CD8-positive, alpha-beta memory T cell (primary cell): ENCODE measurements at regions of chr19 and their contacts with region 1.

Region 1: GRCh38 chr19:5904352-5905113 is at the start of gene VMAC:
- DNase-seq: peak; percentile 100
- H3K4me3 ChIP-seq: peak within 1 kb of the TSS; percentile 97
- H3K4me3 Mint-ChIP-seq: peak within 1 kb of the TSS; percentile 90 to 97 (median 94)
- H3K27ac ChIP-seq: peak within 1 kb of the TSS; percentile 96
- H3K27ac Mint-ChIP-seq: peak within 1 kb of the TSS; percentile 93 to 100 (median 100)
- H3K4me1 ChIP-seq: peaks cover 25% of the 10 kb centered on the region
- H3K4me1 Mint-ChIP-seq: peaks cover 21 to 56% (median 27%) of the 10 kb centered on the region in 3 donors
- H3K27me3 ChIP-seq: no peaks in the 10 kb centered on the region
- H3K27me3 Mint-ChIP-seq: no peaks in the 10 kb centered on the region
- total RNA-seq, gene VMAC: 4.0 to 4.1 TPM

Region 2: GRCh38 chr19:5753743-5754142 is 150.8 kb before region 1 on chr19:
- CTCF ChIA-PET with region 1: no interaction called
- POLR2A ChIA-PET with region 1: no interaction called
- DNase-seq: no peak
- H3K4me3 ChIP-seq: no peak overlapping the region
- H3K4me3 Mint-ChIP-seq: no peak overlapping the region
- H3K27ac ChIP-seq: no peak overlapping the region
- H3K27ac Mint-ChIP-seq: peak overlapping the region in 1 of 8 donors; percentile 50
- H3K4me1 ChIP-seq: no peaks in the 10 kb centered on the region
- H3K4me1 Mint-ChIP-seq: no peaks in the 10 kb centered on the region
- H3K27me3 ChIP-seq: no peaks in the 10 kb centered on the region
- H3K27me3 Mint-ChIP-seq: peaks cover 9 to 10% of the 10 kb centered on the region in 2 donors

Region 3: DNA sequence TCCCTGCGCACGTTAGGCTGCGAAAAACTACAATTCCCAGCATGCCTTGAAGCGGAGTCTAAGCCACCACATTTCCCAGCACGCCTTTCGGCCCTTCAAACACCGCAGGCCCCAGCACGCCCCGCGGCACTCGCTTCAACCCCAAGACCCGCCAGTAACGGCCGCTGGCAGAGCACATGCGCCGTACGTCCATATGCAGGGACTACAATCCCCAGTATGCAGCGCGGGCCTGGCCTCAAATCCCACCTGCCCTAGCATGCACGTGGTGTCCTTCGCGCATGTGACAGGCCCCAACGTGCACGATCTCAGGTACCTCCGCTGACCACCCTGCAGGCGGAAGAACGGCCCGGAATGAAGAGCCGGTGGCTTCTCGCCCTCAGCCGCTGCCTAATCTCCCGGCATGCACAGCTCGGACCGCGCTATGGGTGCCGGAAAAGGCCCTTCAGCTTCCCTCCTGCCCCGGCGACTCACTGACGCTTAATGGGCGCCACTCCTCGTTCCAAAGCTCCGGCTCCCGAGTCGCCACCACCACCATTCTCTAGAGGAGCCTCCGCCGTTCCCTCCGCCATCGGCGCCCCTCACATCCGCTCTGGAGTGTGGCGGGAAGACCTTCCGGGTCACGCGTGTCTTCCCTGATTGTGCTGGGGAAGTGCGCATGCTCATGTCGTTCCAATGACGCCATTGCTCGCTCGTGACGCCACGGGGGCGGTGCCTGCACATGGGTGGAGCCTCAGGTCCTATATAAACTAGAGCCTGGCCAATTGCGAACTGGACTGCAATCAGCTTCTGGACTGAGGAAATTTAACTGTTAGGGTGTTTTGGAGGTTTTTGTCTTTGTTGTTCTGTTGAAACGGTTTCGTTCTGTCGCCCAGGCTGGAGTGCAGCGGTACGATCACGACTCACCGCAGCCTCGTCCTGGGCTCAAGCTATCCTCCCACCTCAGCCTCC is 113.7 kb before region 1 on chr19 and contains the start of gene DUS3L:
- CTCF ChIA-PET with region 1: no interaction called
- POLR2A ChIA-PET with region 1: interaction called, 10 read pairs
- DNase-seq: peak; percentile 93 to 97 (median 94)
- H3K4me3 ChIP-seq: peak within 1 kb of the TSS; percentile 95
- H3K4me3 Mint-ChIP-seq: peak within 1 kb of the TSS; percentile 94 to 100 (median 99)
- H3K27ac ChIP-seq: peak within 1 kb of the TSS; percentile 99
- H3K27ac Mint-ChIP-seq: peak within 1 kb of the TSS; percentile 95 to 100 (median 100)
- H3K4me1 ChIP-seq: peaks cover 14% of the 10 kb centered on the region
- H3K4me1 Mint-ChIP-seq: peaks cover 16 to 18% (median 17%) of the 10 kb centered on the region in 3 donors
- H3K27me3 ChIP-seq: no peaks in the 10 kb centered on the region
- H3K27me3 Mint-ChIP-seq: peaks cover 0 to 3% of the 10 kb centered on the region in 2 donors
- total RNA-seq, gene DUS3L: 90.9 to 93.6 TPM

Region 4: DNA sequence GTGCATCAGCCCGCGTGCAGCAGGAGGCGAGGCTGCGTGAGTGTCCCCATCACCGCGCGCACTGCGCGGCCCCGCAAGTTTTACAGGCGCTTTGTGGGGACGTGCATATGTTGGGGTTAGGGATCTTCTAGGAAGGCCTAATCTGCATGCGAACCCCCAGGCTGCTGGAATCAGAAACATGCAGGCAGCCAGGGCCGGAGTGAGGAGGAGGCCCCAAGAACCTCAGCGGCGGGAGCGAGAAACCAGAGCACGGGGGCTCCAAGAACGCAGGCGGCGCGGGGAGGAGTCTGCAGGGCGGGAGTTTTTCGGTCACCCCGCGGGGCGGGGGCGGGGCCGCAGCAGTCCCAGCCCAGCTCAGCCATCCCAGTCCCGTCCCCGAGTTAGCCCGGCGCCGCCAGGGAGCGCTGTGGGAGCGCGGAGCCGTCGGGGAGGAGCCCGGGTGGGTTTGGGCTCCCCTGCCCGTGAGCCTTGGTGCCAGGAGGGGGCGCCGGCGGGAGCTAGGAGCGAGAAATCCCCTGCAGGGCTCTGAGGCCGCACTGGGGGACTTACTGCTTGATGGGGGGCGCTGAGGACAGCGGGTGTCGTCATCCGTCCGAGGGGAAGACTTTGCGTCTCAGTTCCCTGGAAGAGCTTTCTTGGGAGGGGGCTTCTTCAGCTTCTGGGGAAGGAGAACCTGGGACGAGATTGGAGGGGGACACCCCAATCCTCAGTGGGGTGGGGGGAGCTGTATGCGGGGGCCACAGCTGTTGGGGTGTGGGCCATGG is 100.6 kb before region 1 on chr19:
- CTCF ChIA-PET with region 1: interaction called, 10 read pairs
- POLR2A ChIA-PET with region 1: interaction called, 13 read pairs
- DNase-seq: peak; percentile 87 to 94 (median 89)
- H3K4me3 ChIP-seq: peak overlapping the region; percentile 75
- H3K4me3 Mint-ChIP-seq: peak overlapping the region; percentile 27 to 87 (median 67)
- H3K27ac ChIP-seq: peak overlapping the region; percentile 22
- H3K27ac Mint-ChIP-seq: peak overlapping the region in 7 of 8 donors; percentile 29 to 88 (median 79)
- H3K4me1 ChIP-seq: peaks cover 20% of the 10 kb centered on the region
- H3K4me1 Mint-ChIP-seq: peaks cover 9 to 27% (median 20%) of the 10 kb centered on the region in 3 donors
- H3K27me3 ChIP-seq: peaks cover 22% of the 10 kb centered on the region
- H3K27me3 Mint-ChIP-seq: peaks cover 11 to 26% of the 10 kb centered on the region in 2 donors

Region 5: DNA sequence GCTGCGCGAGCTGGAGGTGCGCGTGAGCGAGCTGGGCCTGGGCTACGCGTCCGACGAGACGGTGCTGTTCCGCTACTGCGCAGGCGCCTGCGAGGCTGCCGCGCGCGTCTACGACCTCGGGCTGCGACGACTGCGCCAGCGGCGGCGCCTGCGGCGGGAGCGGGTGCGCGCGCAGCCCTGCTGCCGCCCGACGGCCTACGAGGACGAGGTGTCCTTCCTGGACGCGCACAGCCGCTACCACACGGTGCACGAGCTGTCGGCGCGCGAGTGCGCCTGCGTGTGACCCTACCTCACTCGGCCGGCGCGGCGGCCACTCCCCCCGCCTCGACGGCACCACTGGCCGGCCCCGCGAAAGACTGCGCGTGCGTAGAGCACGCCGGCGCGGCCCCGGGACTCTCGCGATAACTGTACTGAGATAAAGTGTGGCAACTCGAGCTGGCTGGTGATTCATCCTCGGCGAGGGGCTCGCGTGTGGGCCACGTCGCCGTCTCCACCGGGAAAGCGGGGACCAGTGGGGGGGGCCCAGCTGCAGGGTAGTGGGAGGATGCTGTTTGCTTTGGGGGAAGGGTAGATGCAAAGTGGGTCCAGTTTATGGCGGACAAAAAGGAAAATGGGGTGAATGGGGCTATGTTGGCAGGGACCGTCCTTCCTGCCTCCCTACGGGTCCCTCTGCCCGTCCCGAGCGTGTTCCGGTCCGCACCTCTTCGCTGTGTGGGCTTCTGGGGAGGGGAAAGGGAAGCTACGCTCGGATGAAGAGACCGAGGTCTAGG is 76.5 kb before region 1 on chr19:
- CTCF ChIA-PET with region 1: no interaction called
- POLR2A ChIA-PET with region 1: interaction called, 24 read pairs
- DNase-seq: peak; percentile 82 to 96 (median 87)
- H3K4me3 ChIP-seq: peak overlapping the region; percentile 76
- H3K4me3 Mint-ChIP-seq: peak overlapping the region; percentile 85 to 95 (median 92)
- H3K27ac ChIP-seq: peak overlapping the region; percentile 77
- H3K27ac Mint-ChIP-seq: peak overlapping the region; percentile 81 to 97 (median 92)
- H3K4me1 ChIP-seq: peaks cover 19% of the 10 kb centered on the region
- H3K4me1 Mint-ChIP-seq: peaks cover 4 to 19% (median 4%) of the 10 kb centered on the region in 3 donors
- H3K27me3 ChIP-seq: no peaks in the 10 kb centered on the region
- H3K27me3 Mint-ChIP-seq: peaks cover 3 to 7% of the 10 kb centered on the region in 2 donors

Region 6: GRCh38 chr19:5961969-5962945 is 57.7 kb after region 1 on chr19:
- CTCF ChIA-PET with region 1: interaction called, 9 read pairs
- POLR2A ChIA-PET with region 1: interaction called, 21 read pairs
- DNase-seq: peak; percentile 50 to 89 (median 85)
- H3K4me3 ChIP-seq: peak overlapping the region; percentile 43
- H3K4me3 Mint-ChIP-seq: peak overlapping the region; percentile 17 to 90 (median 82)
- H3K27ac ChIP-seq: peak overlapping the region; percentile 71
- H3K27ac Mint-ChIP-seq: peak overlapping the region; percentile 90 to 99 (median 98)
- H3K4me1 ChIP-seq: peaks cover 88% of the 10 kb centered on the region
- H3K4me1 Mint-ChIP-seq: peaks cover 79 to 97% (median 90%) of the 10 kb centered on the region in 3 donors
- H3K27me3 ChIP-seq: no peaks in the 10 kb centered on the region
- H3K27me3 Mint-ChIP-seq: no peaks in the 10 kb centered on the region

Region 7: DNA sequence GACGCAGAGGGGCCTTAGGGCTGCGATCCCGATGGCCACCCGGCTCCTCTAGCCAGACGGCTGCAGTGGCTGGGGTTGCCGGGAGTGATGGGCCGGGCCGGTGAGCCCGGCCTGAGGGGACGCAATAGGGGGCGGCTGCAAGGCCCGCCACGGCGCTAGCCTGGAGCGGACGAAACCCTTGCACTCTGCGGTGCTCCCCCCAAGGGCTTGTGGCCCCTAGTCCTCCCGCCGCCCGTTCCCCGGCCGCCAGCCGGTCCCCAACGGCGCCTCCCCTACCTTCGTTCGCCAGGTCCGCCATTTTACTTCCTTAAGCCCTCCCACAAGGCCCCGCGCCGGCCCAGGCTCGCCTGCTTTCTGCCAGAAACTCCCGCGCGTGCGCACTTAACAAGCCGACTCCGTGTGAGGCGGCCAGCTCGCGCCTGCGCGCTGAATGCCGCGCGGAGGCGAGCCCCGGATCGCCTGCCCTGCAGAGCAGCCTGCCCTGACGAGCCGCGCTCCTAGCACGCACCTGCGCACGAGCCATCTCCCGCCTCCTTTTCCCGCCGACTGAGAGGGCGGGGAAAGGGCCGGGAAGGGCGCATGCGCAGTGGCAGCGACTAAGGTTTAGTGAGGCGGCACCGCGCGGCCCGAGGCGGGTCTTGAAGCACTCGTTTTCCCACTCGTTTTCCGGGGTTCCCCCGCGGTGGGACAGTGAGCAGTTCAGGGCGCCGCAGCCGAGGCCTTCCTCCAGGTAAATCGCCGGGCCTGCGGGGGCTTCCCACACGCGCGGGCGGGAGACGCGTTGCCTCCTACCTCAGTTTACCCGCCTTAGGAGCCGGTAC is 73.5 kb after region 1 on chr19 and contains the start of gene RANBP3:
- CTCF ChIA-PET with region 1: interaction called, 3 read pairs
- POLR2A ChIA-PET with region 1: interaction called, 14 read pairs
- DNase-seq: peak; percentile 97 to 100 (median 99)
- H3K4me3 ChIP-seq: peak within 1 kb of the TSS; percentile 72
- H3K4me3 Mint-ChIP-seq: peak within 1 kb of the TSS; percentile 92 to 96 (median 94)
- H3K27ac ChIP-seq: peak within 1 kb of the TSS; percentile 80
- H3K27ac Mint-ChIP-seq: peak within 1 kb of the TSS; percentile 89 to 98 (median 94)
- H3K4me1 ChIP-seq: peaks cover 45% of the 10 kb centered on the region
- H3K4me1 Mint-ChIP-seq: peaks cover 50 to 73% (median 65%) of the 10 kb centered on the region in 3 donors
- H3K27me3 ChIP-seq: no peaks in the 10 kb centered on the region
- H3K27me3 Mint-ChIP-seq: peaks cover 0 to 2% of the 10 kb centered on the region in 2 donors
- total RNA-seq, gene RANBP3: 94.8 to 97.6 TPM